IMR-90 (cell line): ENCODE measurements at regions of chr3 and their contacts with region 1.

Region 1: DNA sequence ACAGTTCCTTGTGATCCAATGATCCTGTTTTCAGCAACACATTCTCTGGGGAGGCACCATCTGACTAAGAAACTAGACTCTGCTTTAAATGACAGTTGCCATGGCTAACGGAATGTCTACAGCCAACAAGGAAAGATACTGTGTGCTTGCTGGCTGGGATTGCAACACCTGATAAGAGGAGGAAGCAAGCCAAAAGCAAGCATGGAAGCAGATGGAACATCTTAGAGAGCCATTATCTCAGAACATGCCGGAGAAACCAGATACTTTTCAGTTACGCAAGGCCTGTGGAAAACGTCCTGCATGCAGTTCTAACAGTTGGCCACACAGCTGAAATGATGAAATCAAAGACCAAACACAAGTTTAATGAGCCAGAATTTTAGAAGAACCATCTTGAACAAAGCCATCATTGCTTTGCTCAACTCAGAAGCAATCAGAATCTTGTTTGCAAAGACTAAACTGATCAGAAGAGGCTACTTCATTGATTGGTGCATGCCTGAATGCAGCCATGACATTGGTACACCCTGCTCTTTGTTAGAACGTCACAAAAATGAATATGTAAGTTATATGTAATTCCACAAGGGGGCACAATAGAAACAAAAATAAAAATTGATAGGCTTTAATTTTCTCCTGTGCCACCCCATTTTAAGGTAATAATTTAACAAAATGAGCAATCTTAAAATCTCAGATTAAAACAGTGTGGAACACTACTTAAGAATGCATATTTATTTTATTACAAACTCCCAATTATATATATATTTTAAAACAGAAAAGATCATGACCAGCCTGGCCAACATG is 50.8 kb downstream of the GXYLT2 start:
- DNase-seq: peak; percentile 99
- ATAC-seq: peak; percentile 90
- H3K4me3 ChIP-seq: no peak overlapping the region; the same call in 1 of the 2 replicates
- H3K27ac ChIP-seq: peak overlapping the region; percentile 21; the same call in 1 of the 2 replicates
- H3K4me1 ChIP-seq: peaks cover 2% of the 10 kb centered on the region
- H3K27me3 ChIP-seq: no peaks in the 10 kb centered on the region
- CTCF ChIP-seq: peak; percentile 51
- POLR2A ChIP-seq: no peak
- RAD21 ChIP-seq: peak; percentile 39; the same call in 1 of the 2 replicates

Region 2: DNA sequence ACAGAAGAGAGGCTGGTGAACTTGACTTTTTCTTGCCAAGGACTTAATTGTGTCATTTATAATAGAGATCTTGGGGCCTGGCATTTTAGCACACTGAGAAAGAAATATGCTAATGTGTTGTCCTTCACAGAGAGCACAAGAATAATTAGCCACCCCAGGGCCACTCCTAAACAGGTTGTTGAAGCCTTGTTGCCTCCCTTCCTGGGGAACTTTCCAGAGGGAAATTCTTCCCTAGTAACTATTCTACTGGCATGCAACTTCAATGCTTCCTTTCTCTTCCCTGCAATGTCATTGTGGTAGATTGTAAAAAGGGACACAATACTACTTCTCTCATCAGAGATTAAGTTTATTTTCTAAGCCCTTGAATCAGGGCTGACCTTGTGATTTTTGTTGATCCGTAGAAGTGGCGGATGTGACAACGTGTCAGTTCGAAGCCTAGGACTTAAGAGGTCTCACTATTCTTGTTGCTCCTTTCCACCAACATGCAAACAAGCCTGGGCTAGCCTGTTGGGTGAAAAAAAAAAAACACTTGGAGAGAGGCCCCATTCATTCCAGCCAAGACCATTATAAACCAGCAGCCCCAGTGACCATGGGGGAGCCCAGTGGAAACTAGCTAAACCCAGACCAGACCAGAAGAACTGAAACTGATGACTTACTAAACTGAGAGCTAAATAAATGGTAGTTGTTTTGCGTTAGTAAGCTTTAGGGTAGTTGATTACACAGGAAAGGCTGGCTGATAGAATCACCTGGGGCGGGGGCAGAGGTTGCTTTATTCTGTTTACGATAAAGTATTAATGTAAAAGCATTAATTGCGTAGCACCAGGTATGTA is 377.6 kb before region 1 on chr3:
- CTCF ChIA-PET with region 1: no interaction called
- POLR2A ChIA-PET with region 1: no interaction called
- dilution Hi-C with region 1: no loop called
- in situ Hi-C with region 1: no loop called
- intact Hi-C with region 1: no loop called
- DNase-seq: no peak
- ATAC-seq: no peak
- H3K4me3 ChIP-seq: no peak overlapping the region
- H3K27ac ChIP-seq: no peak overlapping the region
- H3K4me1 ChIP-seq: no peaks in the 10 kb centered on the region
- H3K27me3 ChIP-seq: no peaks in the 10 kb centered on the region; the same call in none of the 2 replicates
- CTCF ChIP-seq: no peak
- POLR2A ChIP-seq: no peak
- RAD21 ChIP-seq: no peak

Region 3: DNA sequence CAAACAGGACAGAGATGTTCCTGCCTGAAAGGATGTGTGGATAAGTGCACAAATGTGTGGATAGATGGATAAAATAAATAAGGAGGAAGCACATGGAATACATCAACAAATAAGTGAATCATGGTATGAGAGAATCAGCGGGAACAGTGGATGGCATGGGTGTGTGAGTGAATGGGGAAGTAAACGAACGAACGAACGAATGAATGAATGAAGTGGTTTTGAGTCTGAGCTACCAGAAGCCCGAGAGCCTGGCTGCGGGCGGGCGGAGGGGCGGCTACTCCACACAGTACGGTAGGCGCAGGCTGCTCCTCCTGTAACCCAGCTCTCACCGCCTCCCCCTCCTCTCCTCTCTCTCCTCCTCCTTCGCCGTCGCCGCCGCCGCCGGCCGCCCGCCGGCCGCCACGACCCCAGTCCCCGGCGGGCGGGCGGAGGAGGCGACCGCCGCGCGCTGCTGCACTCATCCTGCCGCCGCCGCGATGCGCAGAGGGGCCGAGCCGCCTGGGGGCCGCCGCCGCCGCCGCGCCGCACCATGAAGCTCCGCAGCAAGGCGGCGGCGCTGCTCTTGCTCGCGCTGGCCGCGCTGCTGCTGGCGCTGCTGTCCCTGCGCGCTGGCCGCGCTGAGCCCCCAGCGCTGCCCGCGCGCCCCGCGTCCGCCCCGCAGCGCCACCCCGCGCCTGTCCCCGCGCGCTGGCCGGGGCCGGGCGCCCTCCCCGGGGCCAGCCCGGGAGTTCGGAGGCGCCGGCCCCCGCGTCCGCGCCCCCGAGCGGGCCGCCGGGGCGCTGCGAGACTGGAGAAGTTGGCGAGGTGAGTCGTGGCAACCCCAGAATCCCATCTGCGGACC is 50.7 kb before region 1 on chr3 and contains the start of gene GXYLT2:
- CTCF ChIA-PET with region 1: no interaction called
- POLR2A ChIA-PET with region 1: no interaction called
- dilution Hi-C with region 1: no loop called
- in situ Hi-C with region 1: no loop called
- intact Hi-C with region 1: loop called (anchors 1 kb)
- DNase-seq: peak; percentile 71
- ATAC-seq: peak; percentile 78
- H3K4me3 ChIP-seq: peak within 1 kb of the TSS; percentile 53
- H3K27ac ChIP-seq: peak within 1 kb of the TSS; percentile 76
- H3K4me1 ChIP-seq: peaks cover 21% of the 10 kb centered on the region
- H3K27me3 ChIP-seq: no peaks in the 10 kb centered on the region
- CTCF ChIP-seq: 0 out of 2 replicates have a peak, but pooled peaks have one; percentile 12
- POLR2A ChIP-seq: no peak
- RAD21 ChIP-seq: no peak
- total RNA-seq, gene GXYLT2: 11.1 and 11.4 TPM in 2 replicates

Region 4: GRCh38 chr3:72960812-72961518 is 22.3 kb after region 1 on chr3:
- CTCF ChIA-PET with region 1: no interaction called
- POLR2A ChIA-PET with region 1: no interaction called
- dilution Hi-C with region 1: no loop called
- in situ Hi-C with region 1: no loop called
- intact Hi-C with region 1: no loop called
- DNase-seq: peak; percentile 74
- ATAC-seq: peak; percentile 77
- H3K4me3 ChIP-seq: no peak overlapping the region
- H3K27ac ChIP-seq: no peak overlapping the region
- H3K4me1 ChIP-seq: no peaks in the 10 kb centered on the region
- H3K27me3 ChIP-seq: no peaks in the 10 kb centered on the region
- CTCF ChIP-seq: no peak
- POLR2A ChIP-seq: no peak
- RAD21 ChIP-seq: no peak

Region 5: DNA sequence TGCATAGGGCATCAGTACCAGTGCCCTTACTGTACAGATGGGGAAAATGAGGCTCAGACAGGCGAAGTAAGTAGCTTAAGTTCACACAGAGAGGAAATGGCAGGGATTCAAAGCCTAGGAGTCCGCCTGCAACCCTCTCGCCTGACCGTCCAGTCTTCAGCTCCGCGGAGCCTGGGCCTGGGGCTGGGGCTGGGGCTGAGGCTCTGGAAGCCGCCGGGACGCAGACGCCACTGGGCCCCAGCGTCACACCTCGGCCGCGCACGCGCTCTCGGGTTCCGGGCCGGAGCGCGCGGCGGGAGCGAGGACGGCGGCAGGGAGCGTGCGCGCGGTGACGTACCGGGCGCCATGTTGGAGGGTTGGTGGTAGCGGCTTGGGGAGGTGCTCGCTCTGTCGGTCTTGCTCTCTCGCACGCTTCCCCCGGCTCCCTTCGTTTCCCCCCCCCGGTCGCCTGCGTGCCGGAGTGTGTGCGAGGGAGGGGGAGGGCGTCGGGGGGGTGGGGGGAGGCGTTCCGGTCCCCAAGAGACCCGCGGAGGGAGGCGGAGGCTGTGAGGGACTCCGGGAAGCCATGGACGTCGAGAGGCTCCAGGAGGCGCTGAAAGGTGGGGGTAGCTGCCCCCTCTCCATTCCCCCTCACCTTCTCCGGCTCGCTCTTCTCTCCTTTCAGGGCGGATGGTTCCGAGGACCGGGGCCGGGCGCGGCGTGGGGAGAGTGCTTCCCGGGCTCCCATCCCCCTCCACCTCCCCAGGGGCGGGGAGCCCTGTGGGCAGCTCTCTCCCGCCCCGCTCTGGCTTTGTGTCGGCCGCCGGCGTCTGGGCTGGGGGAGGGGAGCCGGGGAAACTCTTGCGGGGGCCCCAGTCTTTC is 58.0 kb after region 1 on chr3 and contains the start of gene PPP4R2:
- CTCF ChIA-PET with region 1: no interaction called
- POLR2A ChIA-PET with region 1: no interaction called
- dilution Hi-C with region 1: no loop called
- in situ Hi-C with region 1: no loop called
- intact Hi-C with region 1: loop called (anchors 1 kb)
- DNase-seq: peak; percentile 88
- ATAC-seq: peak; percentile 91
- H3K4me3 ChIP-seq: peak within 1 kb of the TSS; percentile 79
- H3K27ac ChIP-seq: peak within 1 kb of the TSS; percentile 97
- H3K4me1 ChIP-seq: peaks cover 8% of the 10 kb centered on the region
- H3K27me3 ChIP-seq: no peaks in the 10 kb centered on the region
- CTCF ChIP-seq: no peak; the same call in 1 of the 2 replicates
- POLR2A ChIP-seq: peak; percentile 84
- RAD21 ChIP-seq: no peak
- total RNA-seq, gene PPP4R2: 31.4 and 60.0 TPM in 2 replicates

Region 6: GRCh38 chr3:73070675-73071575 is 132.3 kb after region 1 on chr3:
- CTCF ChIA-PET with region 1: no interaction called
- POLR2A ChIA-PET with region 1: no interaction called
- dilution Hi-C with region 1: no loop called
- in situ Hi-C with region 1: no loop called
- intact Hi-C with region 1: loop called (anchors 1 kb)
- DNase-seq: peak; percentile 92
- ATAC-seq: peak; percentile 81
- H3K4me3 ChIP-seq: no peak overlapping the region
- H3K27ac ChIP-seq: peak overlapping the region; percentile 61
- H3K4me1 ChIP-seq: peaks cover 22% of the 10 kb centered on the region
- H3K27me3 ChIP-seq: no peaks in the 10 kb centered on the region
- CTCF ChIP-seq: no peak
- POLR2A ChIP-seq: no peak
- RAD21 ChIP-seq: no peak